Colonic mucosa (tissue), 4 donors: ENCODE measurements at regions of chr18 and their contacts with region 1.

Region 1: DNA sequence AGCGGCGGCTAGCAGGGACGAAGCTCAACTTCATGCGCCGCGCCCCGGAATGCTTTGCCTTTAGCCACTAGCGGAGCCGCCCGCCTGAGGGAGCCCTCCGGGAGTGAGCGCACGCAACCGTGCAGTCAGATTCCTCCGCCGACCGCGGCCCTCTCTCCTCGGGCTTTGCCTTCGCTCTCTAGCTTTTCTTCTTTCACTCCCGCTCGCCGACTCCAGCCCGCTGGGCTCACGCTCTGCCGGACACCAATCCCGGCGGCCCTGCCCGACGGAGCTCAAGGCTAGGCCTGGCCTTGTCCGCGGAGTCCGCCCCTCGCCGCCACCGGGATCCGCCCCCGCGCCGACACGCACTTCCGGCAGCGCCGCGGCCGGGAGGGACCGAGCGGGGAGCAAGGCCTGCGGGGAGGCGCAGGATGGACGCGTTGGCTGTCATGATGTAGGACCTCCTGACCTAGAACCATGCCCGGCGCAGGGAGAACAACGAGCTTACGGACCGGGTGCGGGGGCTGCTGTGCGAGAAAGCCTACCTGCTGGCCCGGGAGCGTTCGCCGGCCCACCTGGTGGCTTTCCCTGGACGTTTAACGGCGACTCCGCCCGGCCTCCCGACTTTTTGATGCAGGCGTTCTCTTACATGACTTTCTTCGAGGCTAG is 40.8 kb upstream of the AKAIN1 start:
- DNase-seq: peak; percentile 88
- H3K4me3 ChIP-seq: peak overlapping the region; percentile 71
- H3K27ac ChIP-seq: peak overlapping the region; percentile 99
- H3K4me1 ChIP-seq: no peaks in the 10 kb centered on the region
- H3K27me3 ChIP-seq: no peaks in the 10 kb centered on the region
- CTCF ChIP-seq: peak; percentile 40

Region 2: DNA sequence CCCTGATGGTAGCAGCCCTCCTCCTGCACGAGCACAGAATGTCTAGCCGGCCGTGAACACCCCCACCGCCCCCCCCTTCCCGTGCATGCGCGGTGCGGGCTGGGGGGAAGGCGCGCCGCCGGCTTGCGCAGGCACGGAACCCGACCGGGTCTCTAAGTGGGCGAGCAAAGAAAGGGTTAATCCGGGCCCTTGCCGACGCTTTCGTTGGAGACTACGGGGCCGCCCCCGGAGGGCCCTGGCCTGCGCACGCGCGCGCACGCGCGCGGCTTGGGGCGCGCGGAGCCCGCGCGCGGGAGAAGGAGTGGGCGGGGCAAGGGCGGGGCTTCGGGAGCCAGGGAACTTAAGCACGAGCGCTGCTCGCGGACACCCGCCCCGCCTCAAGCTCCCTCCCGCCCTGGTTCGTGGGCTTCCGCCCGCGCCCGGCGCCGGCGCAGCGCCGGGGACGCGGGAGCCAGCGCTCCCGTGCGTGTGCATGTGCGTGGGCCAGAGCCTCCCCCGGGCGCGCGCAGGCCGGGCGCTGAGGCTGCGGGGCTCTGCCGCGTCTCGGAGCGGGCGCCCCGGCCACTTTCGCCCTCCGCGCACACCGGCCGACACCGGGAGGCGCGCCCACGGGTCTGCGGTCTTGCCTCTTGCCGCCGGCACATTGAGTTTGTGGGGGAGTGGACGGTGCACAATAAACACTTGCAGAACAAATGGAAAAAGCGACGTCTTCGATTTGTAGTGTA is 58.3 kb after region 1 on chr18:
- intact Hi-C with region 1: loop called (anchors 2 kb)
- DNase-seq: peak; percentile 95
- H3K4me3 ChIP-seq: peak overlapping the region; percentile 55
- H3K27ac ChIP-seq: peak overlapping the region; percentile 92
- H3K4me1 ChIP-seq: peaks cover 8% of the 10 kb centered on the region
- H3K27me3 ChIP-seq: no peaks in the 10 kb centered on the region
- CTCF ChIP-seq: no peak